Ascending aorta (tissue), 2 donors: ENCODE measurements at regions of chr9 and their contacts with region 1.

Region 1: GRCh38 chr9:105114964-105115728 is 129.3 kb upstream of the SLC44A1 start:
- DNase-seq: peak; percentile 35 to 74
- H3K4me3 ChIP-seq: no peak overlapping the region
- H3K27ac ChIP-seq: no peak overlapping the region
- H3K4me1 ChIP-seq: no peaks in the 10 kb centered on the region
- H3K27me3 ChIP-seq: no peaks in the 10 kb centered on the region
- CTCF ChIP-seq: no peak

Region 2: GRCh38 chr9:105039175-105039799 is 75.9 kb before region 1 on chr9:
- intact Hi-C with region 1: loop called (anchors 10 kb)
- DNase-seq: no peak
- H3K4me3 ChIP-seq: no peak overlapping the region
- H3K27ac ChIP-seq: no peak overlapping the region
- H3K4me1 ChIP-seq: no peaks in the 10 kb centered on the region
- H3K27me3 ChIP-seq: no peaks in the 10 kb centered on the region
- CTCF ChIP-seq: no peak

Region 3: GRCh38 chr9:105280691-105281090 is 165.5 kb after region 1 on chr9:
- intact Hi-C with region 1: no loop called
- DNase-seq: no peak
- H3K4me3 ChIP-seq: no peak overlapping the region
- H3K27ac ChIP-seq: no peak overlapping the region
- H3K4me1 ChIP-seq: no peaks in the 10 kb centered on the region
- H3K27me3 ChIP-seq: no peaks in the 10 kb centered on the region
- CTCF ChIP-seq: no peak

Region 4: DNA sequence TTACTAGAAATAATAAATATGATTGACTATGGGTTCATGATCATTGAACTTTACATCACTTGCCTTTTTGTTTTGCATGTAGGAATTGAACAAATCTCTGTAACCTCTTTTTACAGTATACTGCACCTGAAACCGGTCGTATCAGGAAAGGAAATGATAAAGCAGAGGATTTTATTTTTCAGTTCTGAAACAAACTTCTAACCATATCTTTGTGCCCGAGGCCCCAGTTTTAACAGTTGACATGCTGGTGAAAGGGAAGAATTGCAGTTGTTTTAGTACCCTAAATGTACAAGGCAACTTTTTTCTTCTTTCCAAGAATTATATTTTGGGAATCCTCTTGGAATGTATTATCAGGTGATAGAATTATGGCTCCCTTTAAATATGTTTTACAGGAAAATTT is 607.0 kb after region 1 on chr9:
- intact Hi-C with region 1: no loop called
- DNase-seq: no peak
- H3K4me3 ChIP-seq: no peak overlapping the region
- H3K27ac ChIP-seq: no peak overlapping the region
- H3K4me1 ChIP-seq: no peaks in the 10 kb centered on the region
- H3K27me3 ChIP-seq: no peaks in the 10 kb centered on the region
- CTCF ChIP-seq: no peak